RWPE1 (cell line): ENCODE measurements at regions of chr6 and their contacts with region 1.

Region 1: DNA sequence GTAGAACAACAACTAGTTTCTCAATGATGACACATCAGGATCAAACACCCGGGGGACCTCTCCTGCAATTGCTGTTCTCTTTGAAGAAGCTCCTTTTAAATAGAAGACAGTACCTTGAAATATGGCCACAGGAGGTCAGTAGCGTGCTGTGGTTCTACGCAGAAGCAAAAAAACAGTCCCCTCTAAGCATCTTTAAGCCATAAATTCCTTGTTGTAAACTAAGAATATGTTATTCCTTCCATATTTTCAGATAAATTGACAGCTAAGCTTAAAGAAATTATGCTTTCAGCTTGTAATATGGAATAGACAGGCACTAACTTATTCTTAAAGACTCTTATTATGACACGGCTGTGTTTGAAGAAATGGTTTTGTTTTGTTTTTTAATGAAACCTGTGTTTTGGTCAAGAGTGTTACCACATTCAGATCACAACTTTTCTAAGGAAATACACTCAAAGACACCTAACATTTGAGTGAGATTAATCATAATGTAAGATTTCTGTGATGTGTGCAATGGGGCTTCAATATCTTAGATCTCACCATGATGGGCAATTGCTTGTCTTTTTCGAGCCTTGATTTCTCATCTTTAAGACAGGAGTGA is 49.7 kb upstream of the IL20RA start:
- DNase-seq: peak; percentile 73
- H3K27ac ChIP-seq: no peak overlapping the region
- CTCF ChIP-seq: peak; percentile 78

Region 2: GRCh38 chr6:136812174-136812573 is 282.3 kb before region 1 on chr6:
- CTCF ChIA-PET with region 1: no interaction called
- POLR2A ChIA-PET with region 1: no interaction called
- DNase-seq: no peak
- H3K27ac ChIP-seq: no peak overlapping the region
- CTCF ChIP-seq: no peak

Region 3: GRCh38 chr6:137084090-137084489 is 10.4 kb before region 1 on chr6:
- CTCF ChIA-PET with region 1: interaction called, 10 read pairs
- POLR2A ChIA-PET with region 1: no interaction called
- DNase-seq: no peak
- H3K27ac ChIP-seq: no peak overlapping the region
- CTCF ChIP-seq: no peak

Region 4: DNA sequence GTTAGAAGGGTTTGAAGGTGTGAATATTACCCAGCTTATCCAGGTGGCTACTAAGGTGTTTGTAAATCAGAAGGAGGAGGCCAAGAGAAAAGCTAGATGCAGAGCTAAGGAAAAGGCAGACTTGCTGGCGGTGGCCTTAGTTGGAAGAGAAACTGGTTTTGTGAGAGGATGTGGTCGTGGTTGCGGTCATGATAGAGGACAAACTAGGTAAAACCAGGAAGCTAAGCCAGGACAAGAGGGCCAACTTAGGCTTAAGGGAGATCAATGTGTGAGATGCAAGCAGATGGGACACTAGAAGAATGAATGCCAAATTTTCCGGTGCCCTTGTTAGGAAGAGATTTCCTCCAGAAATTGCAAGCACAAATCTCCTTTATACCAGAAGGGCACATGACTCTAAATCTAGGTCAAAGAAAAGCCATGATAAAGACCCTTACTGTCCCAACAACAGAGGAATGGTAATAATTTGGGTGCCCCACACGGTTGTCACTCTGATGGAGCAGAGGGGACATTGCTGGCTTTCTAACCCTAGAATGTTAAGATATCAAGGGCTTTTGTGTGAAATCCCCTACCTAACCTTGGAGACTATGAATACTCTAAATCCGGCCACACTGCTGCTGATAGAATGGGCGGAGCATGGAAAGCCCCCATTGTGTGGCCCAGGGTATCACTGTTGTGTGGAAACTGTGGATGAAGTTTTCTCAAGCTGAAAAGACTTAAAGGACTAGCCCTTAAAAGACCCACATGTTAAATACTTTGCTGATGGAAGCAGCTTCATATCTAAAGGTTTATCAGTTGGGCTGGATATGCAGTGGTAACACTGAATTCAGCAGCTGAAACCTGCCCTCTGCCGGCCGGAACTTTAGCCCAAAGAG is 71.1 kb after region 1 on chr6:
- CTCF ChIA-PET with region 1: interaction called, 23 read pairs
- POLR2A ChIA-PET with region 1: no interaction called
- DNase-seq: peak; percentile 45
- H3K27ac ChIP-seq: no peak overlapping the region
- CTCF ChIP-seq: peak; percentile 44

Region 5: DNA sequence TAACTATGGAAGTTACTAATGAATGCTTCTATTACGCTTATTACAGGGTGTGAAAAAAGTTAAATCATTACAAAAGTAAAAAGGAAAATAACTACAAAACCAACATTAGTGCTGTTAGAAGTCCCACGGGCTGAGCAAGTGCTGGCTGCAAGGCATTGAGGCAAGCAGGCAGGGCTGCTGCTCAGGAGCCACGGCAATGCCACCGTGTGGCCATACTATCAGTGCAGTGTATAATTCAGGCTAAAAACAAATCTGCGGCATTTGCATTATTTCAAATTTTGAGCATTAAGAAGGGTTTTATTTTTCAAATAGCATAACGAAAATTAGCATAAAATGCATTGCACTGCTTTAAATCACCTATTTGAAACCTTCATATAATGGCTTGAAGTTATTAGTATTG is 107.6 kb after region 1 on chr6:
- CTCF ChIA-PET with region 1: no interaction called
- POLR2A ChIA-PET with region 1: no interaction called
- DNase-seq: no peak
- H3K27ac ChIP-seq: no peak overlapping the region
- CTCF ChIP-seq: peak; percentile 41

Region 6: GRCh38 chr6:137313928-137314855 is 219.7 kb after region 1 on chr6:
- CTCF ChIA-PET with region 1: interaction called, 21 read pairs
- POLR2A ChIA-PET with region 1: interaction called, 3 read pairs
- DNase-seq: peak; percentile 59
- H3K27ac ChIP-seq: no peak overlapping the region
- CTCF ChIP-seq: peak; percentile 87